ENCODE measurements at regions of chr1 and their contacts with region 1.

Region 1: DNA sequence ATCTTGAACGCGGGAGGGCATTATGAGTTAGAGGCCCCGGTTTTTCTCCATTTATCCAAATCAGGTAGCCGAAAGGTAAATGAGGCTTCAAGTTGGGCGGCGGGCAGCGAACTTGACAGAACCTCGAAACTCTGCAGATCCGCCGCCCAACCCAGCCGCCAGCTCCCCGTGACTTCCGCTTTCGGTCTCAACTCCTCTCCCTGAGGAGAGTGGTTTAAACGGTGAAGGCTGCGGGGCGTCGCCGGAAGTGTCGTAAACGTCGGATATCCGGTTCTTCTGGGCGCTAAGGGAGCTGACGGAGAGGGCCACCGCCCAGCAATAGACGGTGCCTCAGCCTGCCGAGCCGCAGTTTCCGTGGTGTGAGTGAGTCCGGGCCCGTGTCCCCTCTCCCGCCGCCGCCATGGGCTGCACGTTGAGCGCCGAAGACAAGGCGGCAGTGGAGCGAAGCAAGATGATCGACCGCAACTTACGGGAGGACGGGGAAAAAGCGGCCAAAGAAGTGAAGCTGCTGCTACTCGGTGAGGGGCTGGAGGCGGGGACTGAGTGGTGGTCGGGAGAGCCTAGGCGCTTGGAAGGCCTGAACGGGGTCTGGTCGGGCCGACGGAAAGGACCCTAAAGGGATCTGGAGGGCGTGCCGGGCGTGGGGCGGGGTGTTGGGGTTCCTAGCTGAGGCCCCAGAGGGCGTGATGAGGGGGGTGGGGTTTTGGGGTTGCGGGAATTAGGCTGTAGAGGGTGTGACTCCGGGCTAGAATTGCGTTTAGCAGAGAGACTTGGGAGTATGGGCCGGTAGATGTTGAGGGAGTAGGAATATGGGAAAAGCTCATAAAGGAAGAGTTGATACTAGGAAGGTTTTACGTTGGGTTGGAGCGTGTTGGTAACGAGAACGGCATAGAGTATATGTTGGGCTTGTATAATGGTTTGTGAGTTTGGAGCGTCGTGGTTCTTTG is at the start of gene GNAI3:
- DNase-seq: peak; percentile 95 to 97
- H3K4me3 ChIP-seq: peak within 1 kb of the TSS; percentile 80 to 92
- H3K27ac ChIP-seq: peak within 1 kb of the TSS; percentile 95 to 97
- H3K4me1 ChIP-seq: peaks cover 0 to 9% of the 10 kb centered on the region in 2 donors
- H3K27me3 ChIP-seq: no peaks in the 10 kb centered on the region
- CTCF ChIP-seq: peak in 3 of 4 experiments; percentile 1 to 29 (median 12)
- POLR2A ChIP-seq: peak; percentile 96
- total RNA-seq, gene GNAI3: 2.3 to 20.0 (median 5.8) TPM

Region 2: DNA sequence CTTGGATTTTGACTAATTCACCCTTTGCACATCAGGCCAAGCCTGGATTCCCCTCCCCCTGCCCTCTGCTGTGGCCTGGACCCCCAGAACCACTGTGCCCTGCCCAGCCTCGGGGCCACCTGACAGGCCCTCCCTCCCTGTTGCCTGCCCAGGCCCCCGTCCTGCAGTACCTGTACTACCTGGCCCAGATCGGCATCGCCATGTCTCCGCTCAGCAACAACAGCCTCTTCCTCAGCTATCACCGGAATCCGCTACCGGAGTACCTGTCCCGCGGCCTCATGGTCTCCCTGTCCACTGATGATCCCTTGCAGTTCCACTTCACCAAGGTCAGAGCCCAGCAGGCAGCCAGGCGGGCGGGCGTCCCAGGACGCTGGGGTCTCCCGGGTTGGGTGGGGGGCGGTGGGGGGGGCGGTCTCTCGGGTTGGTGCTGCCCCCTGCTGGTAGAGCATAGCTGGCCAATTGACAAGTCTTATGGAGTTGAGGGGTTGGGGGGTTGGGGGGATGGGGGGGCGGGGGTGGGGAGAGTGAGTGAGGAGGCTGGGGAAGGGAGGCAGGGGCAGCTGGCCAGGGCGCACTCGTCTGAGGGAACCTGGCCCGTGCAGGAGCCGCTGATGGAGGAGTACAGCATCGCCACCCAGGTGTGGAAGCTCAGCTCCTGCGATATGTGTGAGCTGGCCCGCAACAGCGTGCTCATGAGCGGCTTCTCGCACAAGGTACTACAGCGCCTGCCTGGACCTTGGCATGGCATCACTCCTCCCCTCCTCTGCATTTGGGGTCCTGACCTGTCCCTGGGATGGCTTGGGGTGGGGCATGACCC is 81.7 kb after region 1 on chr1:
- intact Hi-C with region 1: loop called (anchors 10 kb)
- DNase-seq: peak in 1 of 2 donors; percentile 26
- H3K4me3 ChIP-seq: no peak overlapping the region
- H3K27ac ChIP-seq: no peak overlapping the region
- H3K4me1 ChIP-seq: no peaks in the 10 kb centered on the region
- H3K27me3 ChIP-seq: no peaks in the 10 kb centered on the region
- CTCF ChIP-seq: peak in 2 of 4 experiments; percentile 28 to 42
- POLR2A ChIP-seq: no peak

Region 3: DNA sequence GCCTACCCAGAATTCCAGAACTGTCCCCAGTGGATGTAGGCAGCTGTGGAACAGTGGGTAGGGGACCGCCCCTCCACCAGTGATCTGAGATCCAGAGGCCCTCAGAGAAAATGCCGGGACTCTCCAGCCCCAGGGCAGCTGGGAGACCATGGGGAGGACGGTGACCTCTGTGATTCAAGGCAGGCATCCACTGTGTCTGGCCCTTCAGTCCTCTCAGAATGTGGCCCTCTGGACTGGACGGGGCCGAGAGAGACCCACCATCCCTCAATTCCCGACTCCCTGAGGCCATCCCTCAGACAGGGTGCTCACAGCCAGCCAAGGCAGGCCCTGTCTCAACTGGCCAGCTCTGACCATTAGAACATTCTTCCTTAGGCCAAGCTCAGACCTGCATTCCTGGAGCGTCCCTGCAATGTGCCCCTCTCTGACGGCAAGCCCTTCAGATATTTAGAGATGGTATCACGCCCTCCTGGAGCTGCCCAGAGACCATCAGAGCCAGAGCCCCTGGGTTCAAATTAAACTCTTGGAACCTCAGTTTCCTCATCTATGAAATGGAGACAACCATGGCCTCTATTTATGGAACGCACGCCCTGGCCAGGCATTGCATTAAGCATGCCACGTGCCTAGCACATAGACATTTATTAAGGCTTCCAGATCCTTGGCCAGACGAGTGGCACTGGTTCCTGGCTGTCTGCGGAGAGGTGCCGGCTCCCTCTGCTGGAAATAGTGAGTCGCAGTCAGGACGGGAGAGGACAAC is 224.7 kb after region 1 on chr1:
- intact Hi-C with region 1: loop called (anchors 5 kb)
- DNase-seq: peak; percentile 77 to 86
- H3K4me3 ChIP-seq: no peak overlapping the region
- H3K27ac ChIP-seq: no peak overlapping the region
- H3K4me1 ChIP-seq: no peaks in the 10 kb centered on the region
- H3K27me3 ChIP-seq: no peaks in the 10 kb centered on the region
- CTCF ChIP-seq: peak; percentile 81 to 89 (median 86)
- POLR2A ChIP-seq: no peak

Region 4: GRCh38 chr1:110011527-110012041 is 463.0 kb after region 1 on chr1:
- intact Hi-C with region 1: no loop called
- DNase-seq: no peak
- H3K4me3 ChIP-seq: no peak overlapping the region
- H3K27ac ChIP-seq: no peak overlapping the region
- H3K4me1 ChIP-seq: no peaks in the 10 kb centered on the region
- H3K27me3 ChIP-seq: no peaks in the 10 kb centered on the region
- CTCF ChIP-seq: peak in 3 of 4 experiments; percentile 17 to 31 (median 18)
- POLR2A ChIP-seq: no peak

Measured in uterus (tissue), 4 donors.